OCI-LY7 (cell line): ENCODE measurements at regions of chr4 and their contacts with region 1.

Region 1: GRCh38 chr4:138680989-138681604 is 334.5 kb upstream of the NOCT start:
- DNase-seq: peak; percentile 76
- H3K4me3 ChIP-seq: no peak overlapping the region
- H3K27ac ChIP-seq: no peak overlapping the region
- H3K4me1 ChIP-seq: no peaks in the 10 kb centered on the region
- CTCF ChIP-seq: peak; percentile 99

Region 2: GRCh38 chr4:137735561-137736104 is 945.5 kb before region 1 on chr4:
- CTCF ChIA-PET with region 1: no interaction called
- POLR2A ChIA-PET with region 1: no interaction called
- intact Hi-C with region 1: loop called (anchors 2 kb)
- DNase-seq: no peak
- H3K4me3 ChIP-seq: no peak overlapping the region
- H3K27ac ChIP-seq: no peak overlapping the region
- H3K4me1 ChIP-seq: no peaks in the 10 kb centered on the region
- CTCF ChIP-seq: no peak

Region 3: DNA sequence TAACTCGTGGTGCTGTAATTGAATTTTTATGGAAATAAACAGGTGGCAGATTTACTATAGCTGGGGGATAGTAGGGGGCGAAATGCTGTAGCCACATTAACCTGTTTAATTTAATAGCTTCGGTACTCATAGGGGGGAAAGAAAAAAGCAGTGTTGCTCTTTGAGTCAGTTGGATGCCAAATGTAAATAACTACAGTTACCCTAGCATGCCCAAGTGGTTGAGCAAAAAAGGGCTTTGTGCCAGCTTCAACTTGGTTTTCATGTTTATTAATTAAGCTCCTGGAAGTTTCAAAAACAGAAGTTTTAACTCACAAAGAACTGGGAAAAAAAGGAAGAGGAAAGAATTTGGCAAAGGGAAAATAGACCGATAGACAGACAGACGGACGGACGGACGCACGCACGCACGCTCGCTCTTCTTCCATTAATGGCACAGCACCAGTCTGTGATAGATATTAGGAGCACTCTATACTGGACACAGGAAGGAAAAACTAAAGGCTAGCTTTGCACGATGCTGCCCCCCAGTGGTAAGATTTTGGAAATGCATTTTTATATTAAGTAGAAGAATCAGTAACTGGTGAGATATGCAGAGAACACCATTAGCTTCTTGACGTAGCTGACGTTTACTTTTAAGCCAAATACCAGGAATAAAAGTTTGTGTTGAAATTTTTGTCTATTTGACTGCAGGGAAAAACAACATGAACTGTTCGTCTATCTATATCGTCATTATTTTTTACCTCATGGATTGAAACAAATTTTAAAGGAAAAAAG is 590.8 kb before region 1 on chr4:
- CTCF ChIA-PET with region 1: no interaction called
- POLR2A ChIA-PET with region 1: no interaction called
- intact Hi-C with region 1: loop called (anchors 2 kb)
- DNase-seq: peak; percentile 66
- H3K4me3 ChIP-seq: no peak overlapping the region
- H3K27ac ChIP-seq: no peak overlapping the region
- H3K4me1 ChIP-seq: no peaks in the 10 kb centered on the region
- CTCF ChIP-seq: peak; percentile 92

Region 4: DNA sequence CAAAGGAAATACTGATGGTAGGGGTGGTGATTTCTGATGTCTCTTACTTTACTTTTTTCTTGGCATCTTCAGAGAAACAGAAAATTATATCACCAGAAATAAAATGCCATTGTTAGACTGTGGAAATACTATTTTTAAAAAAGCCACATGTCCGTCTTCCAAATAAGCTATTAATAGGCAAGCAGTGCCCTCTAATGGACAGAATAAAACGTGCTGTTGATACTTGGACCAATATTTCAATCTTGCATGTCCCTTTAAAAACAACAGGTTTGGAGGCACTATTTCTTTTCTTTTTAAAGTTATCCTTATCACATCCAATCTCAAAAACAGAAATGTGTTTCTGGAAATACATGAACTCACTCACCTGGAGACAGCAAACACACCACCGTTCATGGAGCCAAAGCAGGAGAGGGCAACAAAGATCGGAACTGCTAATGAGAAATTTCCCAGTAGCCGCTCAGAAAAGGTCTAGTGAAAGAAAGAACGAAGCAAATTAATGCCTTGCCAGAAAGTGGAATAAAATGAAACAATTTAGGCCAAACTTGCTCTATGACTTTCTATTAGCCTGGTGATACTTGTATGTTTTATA is 498.2 kb before region 1 on chr4:
- CTCF ChIA-PET with region 1: no interaction called
- POLR2A ChIA-PET with region 1: no interaction called
- intact Hi-C with region 1: loop called (anchors 10 kb)
- DNase-seq: peak; percentile 60
- H3K4me3 ChIP-seq: no peak overlapping the region
- H3K27ac ChIP-seq: no peak overlapping the region
- H3K4me1 ChIP-seq: peaks cover 6% of the 10 kb centered on the region
- CTCF ChIP-seq: peak; percentile 86

Region 5: GRCh38 chr4:138609943-138610350 is 71.2 kb before region 1 on chr4:
- CTCF ChIA-PET with region 1: no interaction called
- POLR2A ChIA-PET with region 1: no interaction called
- intact Hi-C with region 1: no loop called
- DNase-seq: no peak
- H3K4me3 ChIP-seq: no peak overlapping the region
- H3K27ac ChIP-seq: no peak overlapping the region
- H3K4me1 ChIP-seq: no peaks in the 10 kb centered on the region
- CTCF ChIP-seq: no peak

Region 6: GRCh38 chr4:138870737-138871554 is 189.8 kb after region 1 on chr4:
- CTCF ChIA-PET with region 1: no interaction called
- POLR2A ChIA-PET with region 1: no interaction called
- intact Hi-C with region 1: loop called (anchors 2 kb)
- DNase-seq: peak; percentile 60
- H3K4me3 ChIP-seq: no peak overlapping the region
- H3K27ac ChIP-seq: no peak overlapping the region
- H3K4me1 ChIP-seq: no peaks in the 10 kb centered on the region
- CTCF ChIP-seq: peak; percentile 92